H1 (cell line): ENCODE measurements at regions of chr20 and their contacts with region 1.

Region 1: GRCh38 chr20:38187512-38187911 is 22.4 kb upstream of the TGM2 start:
- DNase-seq: no peak
- H3K4me3 ChIP-seq: no peak overlapping the region
- H3K27ac ChIP-seq: no peak overlapping the region
- H3K4me1 ChIP-seq: no peaks in the 10 kb centered on the region
- H3K27me3 ChIP-seq: no peaks in the 10 kb centered on the region
- CTCF ChIP-seq: peak; percentile 25 to 42 (median 38)
- EP300 ChIP-seq: no peak
- POLR2A ChIP-seq: no peak
- RAD21 ChIP-seq: peak; percentile 22 to 32

Region 2: GRCh38 chr20:38173237-38174156 is 14.0 kb before region 1 on chr20:
- CTCF ChIA-PET with region 1: interaction called, 13 read pairs
- POLR2A ChIA-PET with region 1: no interaction called
- DNase-seq: no peak
- H3K4me3 ChIP-seq: no peak overlapping the region
- H3K27ac ChIP-seq: no peak overlapping the region
- H3K4me1 ChIP-seq: no peaks in the 10 kb centered on the region
- H3K27me3 ChIP-seq: no peaks in the 10 kb centered on the region
- CTCF ChIP-seq: no peak
- EP300 ChIP-seq: no peak
- POLR2A ChIP-seq: no peak
- RAD21 ChIP-seq: no peak

Region 3: GRCh38 chr20:38210741-38211140 is 23.2 kb after region 1 on chr20:
- CTCF ChIA-PET with region 1: interaction called, 12 read pairs
- POLR2A ChIA-PET with region 1: interaction called, 3 read pairs
- DNase-seq: no peak
- H3K4me3 ChIP-seq: no peak overlapping the region
- H3K27ac ChIP-seq: no peak overlapping the region
- H3K4me1 ChIP-seq: no peaks in the 10 kb centered on the region
- H3K27me3 ChIP-seq: no peaks in the 10 kb centered on the region
- CTCF ChIP-seq: no peak
- EP300 ChIP-seq: no peak
- POLR2A ChIP-seq: no peak
- RAD21 ChIP-seq: no peak

Region 4: DNA sequence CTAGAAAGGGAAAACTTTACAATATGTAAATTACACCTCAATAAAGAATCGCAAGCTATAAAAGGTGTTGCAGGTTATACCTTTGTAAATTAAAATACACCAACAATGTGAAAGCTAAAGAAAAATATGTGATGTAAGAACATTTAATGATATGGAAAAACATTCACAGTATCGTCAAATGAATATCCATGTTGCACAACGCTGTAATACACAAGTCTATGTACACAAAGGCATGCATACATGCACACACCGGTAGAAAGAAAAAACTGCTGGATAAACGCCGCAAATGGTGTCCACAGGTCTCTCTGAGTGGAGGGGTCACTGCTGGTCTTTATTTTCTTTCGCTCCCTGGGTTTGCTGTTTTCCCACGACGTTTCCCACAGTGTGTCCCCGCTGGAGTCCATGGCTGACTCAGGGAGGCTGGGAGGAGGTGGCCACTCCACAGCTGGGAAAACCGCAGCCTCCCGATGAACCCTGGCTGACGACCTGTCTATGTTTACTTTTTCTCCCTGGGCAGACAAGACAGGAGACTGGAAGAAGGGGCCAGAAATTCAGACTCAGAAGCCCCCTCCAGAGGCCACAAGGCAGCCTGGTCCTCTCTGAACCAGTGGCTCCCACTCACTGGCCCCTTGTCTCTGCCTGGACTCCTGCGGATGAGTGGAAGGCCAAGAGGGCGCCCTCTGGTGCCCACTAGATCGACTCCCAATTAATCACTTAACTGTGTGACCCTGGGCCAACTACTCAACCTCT is 103.5 kb after region 1 on chr20:
- CTCF ChIA-PET with region 1: no interaction called
- POLR2A ChIA-PET with region 1: no interaction called
- DNase-seq: peak; percentile 49 to 74
- H3K4me3 ChIP-seq: no peak overlapping the region
- H3K27ac ChIP-seq: no peak overlapping the region
- H3K4me1 ChIP-seq: peaks cover 0 to 4% (median 3%) of the 10 kb centered on the region in 4 experiments; a peak in 3 of 7 replicates
- H3K27me3 ChIP-seq: no peaks in the 10 kb centered on the region
- CTCF ChIP-seq: peak; percentile 75 to 94 (median 85)
- EP300 ChIP-seq: no peak
- POLR2A ChIP-seq: no peak
- RAD21 ChIP-seq: peak; percentile 56 to 70